ENCODE measurements at regions of chr2 and their contacts with region 1.

Region 1: DNA sequence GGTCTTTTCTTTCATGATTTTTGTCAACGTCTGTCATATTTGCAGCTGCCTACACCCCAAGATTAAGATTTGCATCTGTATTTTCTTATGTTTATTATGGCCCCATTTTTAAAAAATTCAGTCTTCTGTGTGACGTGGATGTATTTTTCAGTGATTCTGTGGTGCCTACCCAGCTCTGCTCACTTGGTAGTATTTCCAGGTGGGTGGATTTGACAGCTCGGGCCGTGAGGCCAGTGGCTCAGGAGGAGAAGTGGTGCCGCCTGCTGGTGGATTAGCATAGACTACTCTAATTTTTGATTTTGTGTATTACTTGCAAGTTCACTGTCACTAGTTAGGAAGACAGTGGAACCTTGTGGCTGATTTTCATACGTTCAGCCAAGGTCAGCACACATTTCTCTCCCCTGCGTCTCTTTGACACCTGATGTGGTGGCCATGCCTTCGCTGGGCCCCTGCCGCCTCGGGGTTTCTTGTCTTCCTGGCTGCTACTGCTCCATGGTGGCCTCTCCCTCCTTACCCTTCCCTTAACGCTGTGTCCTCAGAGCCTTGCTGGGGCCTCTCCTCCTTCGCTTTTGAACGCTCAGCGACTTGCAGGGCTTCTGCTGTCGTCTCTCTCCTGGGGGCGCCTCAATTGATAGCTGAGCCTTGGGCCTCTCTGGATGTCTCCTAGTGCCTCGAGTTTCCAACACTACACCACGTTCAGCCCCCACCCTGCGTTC is 89.3 kb downstream of the DGKD start:
- DNase-seq: peak; percentile 85
- ATAC-seq: peak; percentile 84
- H3K4me3 ChIP-seq: no peak overlapping the region
- H3K4me3 Mint-ChIP-seq: no peak overlapping the region
- H3K27ac ChIP-seq: peak overlapping the region in 1 of 2 donors; percentile 28
- H3K27ac Mint-ChIP-seq: peak overlapping the region; percentile 80
- H3K4me1 ChIP-seq: peaks cover 5 to 8% of the 10 kb centered on the region in 2 donors
- H3K4me1 Mint-ChIP-seq: peaks cover 19% of the 10 kb centered on the region
- H3K27me3 ChIP-seq: no peaks in the 10 kb centered on the region
- H3K27me3 Mint-ChIP-seq: no peaks in the 10 kb centered on the region
- CTCF ChIP-seq: peak; percentile 87

Region 2: DNA sequence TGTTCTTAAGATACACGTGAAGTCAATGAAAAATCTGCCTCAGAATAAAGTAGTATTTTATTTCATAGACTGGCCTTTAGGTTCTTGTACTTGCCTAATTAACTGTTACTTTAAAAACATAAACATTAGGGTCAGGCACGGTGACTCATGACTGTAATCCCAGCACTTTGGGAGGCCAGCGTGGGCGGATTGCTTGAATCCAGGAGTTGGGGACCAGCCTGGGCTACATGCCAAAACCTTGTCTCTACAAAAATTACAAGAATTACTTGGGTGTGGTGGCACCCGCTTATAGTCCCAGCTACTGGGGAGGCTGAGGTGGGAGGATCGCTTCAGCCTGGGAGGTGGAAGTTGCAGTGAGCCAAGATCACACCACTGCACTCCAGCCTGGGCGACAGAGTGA is 589.5 kb before region 1 on chr2:
- CTCF ChIA-PET with region 1: no interaction called
- POLR2A ChIA-PET with region 1: no interaction called
- intact Hi-C with region 1: loop called (anchors 1 kb)
- DNase-seq: no peak
- ATAC-seq: no peak
- H3K4me3 ChIP-seq: no peak overlapping the region
- H3K4me3 Mint-ChIP-seq: no peak overlapping the region
- H3K27ac ChIP-seq: no peak overlapping the region
- H3K27ac Mint-ChIP-seq: no peak overlapping the region
- H3K4me1 ChIP-seq: no peaks in the 10 kb centered on the region
- H3K4me1 Mint-ChIP-seq: no peaks in the 10 kb centered on the region
- H3K27me3 ChIP-seq: no peaks in the 10 kb centered on the region
- H3K27me3 Mint-ChIP-seq: no peaks in the 10 kb centered on the region
- CTCF ChIP-seq: no peak

Region 3: GRCh38 chr2:233387667-233388528 is 55.7 kb before region 1 on chr2:
- CTCF ChIA-PET with region 1: interaction called, 12 read pairs
- POLR2A ChIA-PET with region 1: interaction called, 5 read pairs
- intact Hi-C with region 1: loop called (anchors 10 kb)
- DNase-seq: no peak
- ATAC-seq: no peak
- H3K4me3 ChIP-seq: no peak overlapping the region
- H3K4me3 Mint-ChIP-seq: peak overlapping the region; percentile 37
- H3K27ac ChIP-seq: peak overlapping the region in 1 of 2 donors; percentile 85
- H3K27ac Mint-ChIP-seq: peak overlapping the region; percentile 76
- H3K4me1 ChIP-seq: peaks cover 52 to 54% of the 10 kb centered on the region in 2 donors
- H3K4me1 Mint-ChIP-seq: peaks cover 68% of the 10 kb centered on the region
- H3K27me3 ChIP-seq: no peaks in the 10 kb centered on the region
- H3K27me3 Mint-ChIP-seq: no peaks in the 10 kb centered on the region
- CTCF ChIP-seq: no peak

Region 4: GRCh38 chr2:233413559-233414272 is 29.9 kb before region 1 on chr2:
- CTCF ChIA-PET with region 1: interaction called, 426 read pairs
- POLR2A ChIA-PET with region 1: interaction called, 4 read pairs
- intact Hi-C with region 1: loop called (anchors 1 kb)
- DNase-seq: no peak
- ATAC-seq: no peak
- H3K4me3 ChIP-seq: no peak overlapping the region
- H3K4me3 Mint-ChIP-seq: no peak overlapping the region
- H3K27ac ChIP-seq: peak overlapping the region; percentile 30 to 92
- H3K27ac Mint-ChIP-seq: peak overlapping the region; percentile 65
- H3K4me1 ChIP-seq: peaks cover 75 to 78% of the 10 kb centered on the region in 2 donors
- H3K4me1 Mint-ChIP-seq: peaks cover 82% of the 10 kb centered on the region
- H3K27me3 ChIP-seq: no peaks in the 10 kb centered on the region
- H3K27me3 Mint-ChIP-seq: no peaks in the 10 kb centered on the region
- CTCF ChIP-seq: no peak

Region 5: GRCh38 chr2:233430081-233430480 is 13.5 kb before region 1 on chr2:
- CTCF ChIA-PET with region 1: interaction called, 13 read pairs
- POLR2A ChIA-PET with region 1: no interaction called
- intact Hi-C with region 1: no loop called
- DNase-seq: no peak
- ATAC-seq: no peak
- H3K4me3 ChIP-seq: no peak overlapping the region
- H3K4me3 Mint-ChIP-seq: no peak overlapping the region
- H3K27ac ChIP-seq: peak overlapping the region in 1 of 2 donors; percentile 48
- H3K27ac Mint-ChIP-seq: no peak overlapping the region
- H3K4me1 ChIP-seq: peaks cover 13 to 17% of the 10 kb centered on the region in 2 donors
- H3K4me1 Mint-ChIP-seq: peaks cover 64% of the 10 kb centered on the region
- H3K27me3 ChIP-seq: no peaks in the 10 kb centered on the region
- H3K27me3 Mint-ChIP-seq: no peaks in the 10 kb centered on the region
- CTCF ChIP-seq: no peak